Posterior cingulate gyrus (tissue), 11 donors: ENCODE measurements at regions of chrX and their contacts with region 1.

Region 1: DNA sequence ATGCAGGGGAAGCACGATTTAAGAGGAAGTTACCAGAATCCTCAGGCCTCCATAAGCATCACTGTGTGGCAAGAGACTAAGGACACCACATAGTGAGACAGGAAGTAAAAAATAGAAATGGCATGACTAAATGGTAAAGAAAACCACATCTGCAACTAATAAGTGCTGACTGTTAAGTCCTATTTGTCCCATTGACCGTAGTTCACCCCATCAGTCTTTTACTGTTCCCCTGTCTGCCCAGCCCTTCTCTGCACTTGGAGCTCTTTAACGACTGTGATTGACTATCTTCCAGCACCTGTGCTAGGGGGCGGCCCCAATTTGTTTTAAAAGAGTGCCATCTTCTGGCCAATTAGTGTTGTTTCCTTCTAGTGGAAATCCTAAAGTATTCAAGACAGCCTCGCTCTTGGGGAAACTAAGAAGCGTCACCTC is 94.2 kb downstream of the MAOA start:
- DNase-seq: peak in 4 of 10 donors; percentile 8 to 28 (median 12)

Region 2: GRCh38 chrX:41796577-41796976 is 1953.7 kb before region 1 on chrX:
- intact Hi-C with region 1: loop called (anchors 10 kb)
- DNase-seq: no peak

Region 3: GRCh38 chrX:43573441-43574015 is 176.7 kb before region 1 on chrX:
- intact Hi-C with region 1: no loop called
- DNase-seq: no peak

Region 4: DNA sequence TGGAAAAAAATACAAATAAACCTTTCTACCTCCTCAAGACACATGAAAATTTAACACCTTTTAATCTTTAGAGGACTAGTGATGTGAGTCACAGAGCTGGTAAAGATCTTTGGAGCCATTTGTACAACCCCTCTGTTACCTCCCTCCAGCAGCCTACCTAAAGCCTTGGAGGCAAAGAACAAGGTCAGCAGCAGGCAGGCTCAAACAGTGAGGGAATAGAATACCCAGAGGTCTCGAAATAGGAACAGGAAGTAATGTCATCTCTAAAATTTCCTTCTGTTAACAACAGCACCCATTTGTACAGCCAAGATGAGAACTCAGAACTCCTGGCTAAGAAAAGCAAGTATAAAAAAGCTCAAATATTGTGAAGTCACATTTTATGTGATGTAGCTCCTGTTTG is 142.2 kb after region 1 on chrX:
- intact Hi-C with region 1: no loop called
- DNase-seq: no peak